ENCODE measurements at regions of chr16 and their contacts with region 1.

Region 1: DNA sequence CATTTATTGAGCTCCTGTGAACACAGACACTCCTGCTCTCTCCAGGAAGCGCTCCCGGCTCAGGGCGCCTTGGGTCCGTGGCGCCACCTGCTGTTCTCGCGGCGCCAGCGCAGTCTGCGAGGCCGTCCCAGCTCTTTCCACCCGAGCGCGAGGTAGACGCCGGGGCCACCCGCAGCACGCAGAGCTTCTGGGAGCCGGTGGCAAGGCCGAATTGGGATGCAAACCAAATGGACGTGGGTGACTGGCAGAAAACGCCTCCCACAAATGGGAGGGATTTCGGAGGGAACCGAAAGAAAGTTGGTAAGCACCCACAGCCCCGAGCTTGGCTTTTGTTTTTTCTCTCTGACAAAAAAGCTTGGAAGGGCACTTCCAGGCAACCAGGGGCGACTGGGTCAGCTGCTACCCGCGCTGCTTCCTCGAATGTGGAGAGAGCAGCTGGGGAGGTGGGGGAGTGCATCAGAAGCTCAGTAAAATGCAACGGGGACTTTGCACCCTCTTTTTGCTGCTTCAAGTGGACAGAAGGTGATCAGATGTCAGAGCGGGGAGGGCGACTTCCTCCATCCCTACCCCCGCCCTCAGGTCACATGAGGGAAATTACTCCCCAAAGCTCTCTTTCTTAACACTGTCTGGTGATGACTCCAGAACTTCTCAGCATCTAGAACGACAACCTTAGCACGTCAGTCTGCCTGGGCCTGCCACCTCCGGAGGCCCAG is 13.5 kb upstream of the N4BP1 start:
- DNase-seq: peak; percentile 90 to 96
- H3K4me3 ChIP-seq: peak overlapping the region; percentile 48 to 58
- H3K27ac ChIP-seq: peak overlapping the region; percentile 83
- H3K4me1 ChIP-seq: peaks cover 19% of the 10 kb centered on the region
- H3K27me3 ChIP-seq: no peaks in the 10 kb centered on the region
- CTCF ChIP-seq: peak; percentile 90 to 97 (median 92)
- POLR2A ChIP-seq: no peak

Region 2: DNA sequence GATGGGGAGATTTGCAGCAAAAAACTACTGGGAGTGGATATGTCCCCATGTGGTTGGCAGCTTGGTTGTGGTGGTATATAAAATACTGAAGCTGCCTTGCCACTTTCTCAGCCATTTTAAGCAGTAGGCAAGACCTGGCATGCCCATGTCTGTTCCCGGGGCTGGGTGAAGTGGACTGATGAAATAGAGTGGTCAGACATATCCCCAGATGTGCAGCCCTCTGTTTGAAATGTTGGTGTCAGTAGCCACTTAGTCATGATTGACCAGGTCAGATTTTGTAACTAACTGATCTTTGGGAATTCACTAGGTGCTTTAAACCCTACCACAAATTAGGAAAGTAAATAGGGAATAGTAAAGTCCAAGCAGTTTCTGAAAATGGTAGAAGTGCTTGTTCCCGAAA is 1010.7 kb before region 1 on chr16:
- intact Hi-C with region 1: no loop called
- DNase-seq: no peak
- H3K4me3 ChIP-seq: no peak overlapping the region
- H3K27ac ChIP-seq: no peak overlapping the region
- H3K4me1 ChIP-seq: peaks cover 11% of the 10 kb centered on the region
- H3K27me3 ChIP-seq: no peaks in the 10 kb centered on the region
- CTCF ChIP-seq: no peak
- POLR2A ChIP-seq: no peak

Region 3: GRCh38 chr16:48353565-48354163 is 269.8 kb before region 1 on chr16:
- intact Hi-C with region 1: loop called (anchors 10 kb)
- DNase-seq: no peak
- H3K4me3 ChIP-seq: no peak overlapping the region
- H3K27ac ChIP-seq: no peak overlapping the region
- H3K4me1 ChIP-seq: no peaks in the 10 kb centered on the region
- H3K27me3 ChIP-seq: no peaks in the 10 kb centered on the region
- CTCF ChIP-seq: peak; percentile 77 to 92 (median 79)
- POLR2A ChIP-seq: no peak

Region 4: DNA sequence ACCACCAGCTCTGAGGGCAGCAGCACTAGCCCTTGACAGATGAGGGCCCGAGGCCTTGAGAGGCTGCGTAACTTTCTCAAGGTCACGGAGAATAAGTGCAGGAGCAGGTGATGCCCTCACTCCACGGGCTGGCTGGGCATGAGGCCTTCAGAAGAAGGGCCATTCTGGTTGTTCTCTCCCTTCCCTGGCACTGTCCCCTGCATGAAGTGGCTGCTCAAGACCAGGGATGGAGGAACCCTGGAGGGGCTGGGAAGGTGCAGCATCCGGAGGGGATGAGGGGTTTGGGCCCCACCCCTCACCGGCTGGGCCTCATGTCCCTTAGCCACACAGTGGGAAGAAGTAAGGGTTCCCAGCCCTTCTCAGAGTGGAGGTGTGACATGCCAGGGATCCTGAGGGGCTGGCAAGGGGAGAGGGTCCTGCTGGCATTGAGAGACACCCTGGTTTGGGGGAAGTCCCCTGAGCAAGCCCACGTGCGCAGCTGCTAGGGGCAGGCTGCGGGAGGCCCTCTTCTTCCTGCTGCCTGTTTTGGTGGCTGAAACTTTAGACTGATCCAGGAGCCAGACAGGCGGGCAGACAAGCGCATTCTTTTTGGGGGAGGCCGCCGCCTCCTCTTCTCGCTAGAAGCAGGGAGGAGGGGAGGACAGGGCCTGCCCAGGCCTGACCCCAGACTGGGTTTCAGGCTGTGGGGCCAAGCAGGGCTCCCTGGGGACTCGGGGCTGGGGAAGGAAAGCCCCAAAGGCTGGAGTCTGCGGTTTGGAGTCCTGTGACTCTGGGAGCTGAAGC is 87.4 kb before region 1 on chr16:
- intact Hi-C with region 1: loop called (anchors 10 kb)
- DNase-seq: peak; percentile 90 to 94
- H3K4me3 ChIP-seq: no peak overlapping the region
- H3K27ac ChIP-seq: peak overlapping the region; percentile 85
- H3K4me1 ChIP-seq: peaks cover 55% of the 10 kb centered on the region
- H3K27me3 ChIP-seq: no peaks in the 10 kb centered on the region
- CTCF ChIP-seq: no peak
- POLR2A ChIP-seq: no peak